ENCODE measurements at regions of chr1 and their contacts with region 1.

Region 1: DNA sequence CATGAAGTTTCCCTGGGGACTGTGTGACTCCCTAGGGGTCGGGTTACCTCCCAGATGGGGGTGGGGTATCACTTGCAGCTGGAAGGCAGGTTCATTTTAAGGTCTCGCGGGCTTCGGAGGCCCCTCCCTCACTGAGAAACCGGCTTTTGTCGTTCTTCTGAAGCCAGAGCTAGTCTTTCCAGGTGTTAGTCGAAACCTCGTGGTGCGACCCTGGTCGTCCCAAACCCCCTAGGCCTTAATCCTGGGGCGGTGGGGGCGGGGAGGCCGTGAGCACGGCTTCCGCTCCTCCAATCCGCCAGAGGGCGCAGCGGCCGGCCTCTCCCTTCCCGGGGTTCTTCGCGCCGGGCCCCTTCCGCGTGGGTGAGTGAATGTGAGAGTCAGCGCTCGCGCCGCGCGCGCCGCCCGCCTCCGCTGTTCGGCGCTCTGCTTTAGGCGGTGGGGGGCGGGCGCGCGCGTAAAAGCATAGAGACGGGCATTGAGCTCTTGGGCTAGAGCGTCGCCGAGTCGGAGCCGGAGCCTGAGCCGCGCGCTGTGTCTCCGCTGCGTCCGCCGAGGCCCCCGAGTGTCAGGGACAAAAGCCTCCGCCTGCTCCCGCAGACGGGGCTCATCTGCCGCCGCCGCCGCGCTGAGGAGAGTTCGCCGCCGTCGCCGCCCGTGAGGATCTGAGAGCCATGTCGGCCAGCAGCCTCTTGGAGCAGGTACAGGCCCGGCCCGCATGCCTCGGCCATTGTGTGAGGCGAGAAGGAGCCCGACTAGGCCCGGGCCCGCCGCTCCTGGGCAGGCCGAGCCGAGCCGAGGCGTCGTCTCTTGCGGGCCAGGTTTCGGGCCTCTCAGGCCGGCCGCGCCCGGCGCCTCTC is at the start of gene YTHDF2:
- DNase-seq: peak; percentile 96
- H3K4me3 ChIP-seq: peak within 1 kb of the TSS; percentile 89 to 99 (median 92)
- H3K27ac ChIP-seq: peak within 1 kb of the TSS; percentile 81
- H3K4me1 ChIP-seq: peaks cover 25% of the 10 kb centered on the region
- H3K27me3 ChIP-seq: no peaks in the 10 kb centered on the region
- CTCF ChIP-seq: peak; percentile 66 to 92
- total RNA-seq, gene YTHDF2: 75.8 to 84.7 TPM

Region 2: DNA sequence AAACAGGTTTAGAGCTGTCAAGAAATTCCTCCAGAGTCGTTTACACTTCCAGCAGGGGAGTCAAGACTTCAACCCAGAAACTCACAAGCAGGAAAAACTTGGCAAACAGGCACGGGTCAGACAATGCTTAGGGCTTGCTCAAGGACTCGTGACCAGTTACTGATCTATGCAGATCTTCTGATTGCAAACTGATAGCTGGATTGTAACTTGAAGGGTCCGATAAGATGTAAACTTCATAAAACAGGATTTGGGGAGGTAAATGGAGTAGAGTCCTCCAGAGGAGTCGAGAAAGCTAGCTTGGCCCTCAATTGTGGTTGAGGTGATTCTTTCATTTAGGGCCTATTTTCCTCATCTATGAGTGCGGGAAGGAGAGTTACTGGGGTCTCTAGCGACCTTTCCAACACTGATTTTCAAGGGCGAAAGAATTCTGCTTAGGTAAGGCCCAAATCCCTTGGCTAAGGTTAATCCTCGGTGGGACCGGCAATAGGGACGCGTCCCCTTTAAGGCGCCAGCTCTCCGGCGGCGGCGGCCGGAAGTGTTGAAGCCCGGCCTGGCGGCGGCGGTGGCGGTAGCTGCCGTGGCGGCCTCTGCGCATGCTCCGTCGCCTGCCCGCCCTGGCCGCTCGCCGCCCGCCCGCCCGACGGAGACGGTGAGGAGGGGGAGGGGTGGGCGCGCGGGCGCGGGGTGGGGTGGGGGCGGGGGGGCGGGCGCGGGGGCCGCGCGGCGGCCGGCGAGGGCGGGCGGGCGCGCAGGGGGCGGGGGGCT is 68.3 kb before region 1 on chr1 and contains the start of gene GMEB1:
- CTCF ChIA-PET with region 1: no interaction called
- dilution Hi-C with region 1: no loop called
- in situ Hi-C with region 1: no loop called
- intact Hi-C with region 1: loop called (anchors 2 kb)
- DNase-seq: peak; percentile 80
- H3K4me3 ChIP-seq: peak within 1 kb of the TSS; percentile 70 to 92 (median 73)
- H3K27ac ChIP-seq: peak within 1 kb of the TSS; percentile 81
- H3K4me1 ChIP-seq: peaks cover 6% of the 10 kb centered on the region
- H3K27me3 ChIP-seq: no peaks in the 10 kb centered on the region
- CTCF ChIP-seq: no peak
- total RNA-seq, gene GMEB1: 10.1 to 11.0 TPM

Region 3: GRCh38 chr1:28756846-28757245 is 20.2 kb after region 1 on chr1:
- CTCF ChIA-PET with region 1: interaction called, 11 read pairs
- dilution Hi-C with region 1: no loop called
- in situ Hi-C with region 1: no loop called
- intact Hi-C with region 1: no loop called
- DNase-seq: no peak
- H3K4me3 ChIP-seq: no peak overlapping the region
- H3K27ac ChIP-seq: no peak overlapping the region
- H3K4me1 ChIP-seq: peaks cover 7% of the 10 kb centered on the region
- H3K27me3 ChIP-seq: no peaks in the 10 kb centered on the region
- CTCF ChIP-seq: peak; percentile 25 to 28

Region 4: DNA sequence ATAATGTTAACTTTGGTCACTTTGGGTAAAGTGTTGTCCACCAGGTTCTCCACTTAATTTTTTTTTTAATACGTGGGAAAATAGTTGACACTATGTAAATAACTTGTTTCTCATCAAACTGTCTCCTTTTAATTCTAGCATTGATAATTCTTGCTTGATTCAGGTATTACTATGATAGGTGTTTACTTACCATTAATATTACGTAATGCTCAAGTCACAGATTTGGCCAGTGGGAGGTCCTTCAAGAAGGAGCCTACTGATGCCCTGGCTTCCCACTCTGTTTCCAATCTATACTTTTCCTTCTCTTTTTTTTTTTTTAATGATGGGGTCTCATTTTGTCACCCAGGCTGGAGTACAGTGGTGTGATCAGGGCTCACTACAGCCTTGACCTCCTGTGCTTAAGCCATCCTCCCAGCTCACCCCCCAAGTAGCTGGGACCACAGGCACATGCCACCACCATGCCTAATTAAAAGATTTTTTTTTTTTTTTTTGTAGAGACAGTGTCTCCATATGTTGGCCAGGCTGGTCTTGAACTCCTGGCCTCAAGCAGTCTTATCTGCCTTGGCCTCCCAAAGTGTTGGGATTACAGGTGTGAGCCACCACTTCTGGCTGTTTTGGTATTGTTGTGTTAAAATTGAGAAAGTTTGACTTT is 30.0 kb after region 1 on chr1:
- CTCF ChIA-PET with region 1: interaction called, 22 read pairs
- dilution Hi-C with region 1: no loop called
- in situ Hi-C with region 1: no loop called
- intact Hi-C with region 1: no loop called
- DNase-seq: no peak
- H3K4me3 ChIP-seq: no peak overlapping the region
- H3K27ac ChIP-seq: no peak overlapping the region
- H3K4me1 ChIP-seq: peaks cover 5% of the 10 kb centered on the region
- H3K27me3 ChIP-seq: no peaks in the 10 kb centered on the region
- CTCF ChIP-seq: no peak